Activated CD8-positive, alpha-beta memory T cell treated with anti-CD3 and anti-CD28 coated beads, Interleukin-2, amount 10 ng/mL, durations not matched to agents 7 days and 5 days (primary cell): ENCODE measurements at regions of chr9 and their contacts with region 1.

Region 1: GRCh38 chr9:90102292-90102901 is 497.6 kb downstream of the GADD45G start:
- DNase-seq: peak; percentile 87
- ATAC-seq: peak; percentile 98
- H3K4me3 Mint-ChIP-seq: no peak overlapping the region
- H3K27ac Mint-ChIP-seq: no peak overlapping the region
- H3K4me1 Mint-ChIP-seq: peaks cover 22% of the 10 kb centered on the region
- H3K27me3 Mint-ChIP-seq: peaks cover 16% of the 10 kb centered on the region

Region 2: DNA sequence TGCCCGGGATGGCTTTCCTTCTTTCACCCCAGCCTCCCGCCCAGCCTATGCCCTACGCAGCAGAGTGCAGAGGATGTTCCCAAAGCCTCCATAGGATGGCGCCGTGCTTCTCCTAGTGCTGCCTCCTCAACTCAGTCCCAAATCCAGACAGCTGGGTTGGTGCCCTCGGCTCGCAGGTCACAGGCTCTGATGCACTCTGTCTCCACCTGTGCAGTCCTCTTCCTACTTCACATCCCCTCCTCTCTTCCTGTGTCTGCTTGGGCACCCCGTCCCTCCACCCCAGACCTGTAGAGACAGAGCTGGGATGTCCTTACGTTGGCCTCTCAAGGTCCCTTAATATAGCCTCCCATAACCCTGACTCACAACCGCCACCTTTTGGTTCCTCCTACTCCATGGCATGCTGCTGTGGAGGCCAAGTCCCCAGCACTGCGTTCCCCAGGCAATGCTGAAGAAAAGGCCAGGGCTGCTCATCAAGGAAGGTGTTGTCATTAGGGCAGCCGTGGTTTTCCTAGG is 183.2 kb before region 1 on chr9:
- CTCF ChIA-PET with region 1: interaction called, 17 read pairs
- DNase-seq: peak; percentile 68
- ATAC-seq: peak; percentile 92
- H3K4me3 Mint-ChIP-seq: no peak overlapping the region
- H3K27ac Mint-ChIP-seq: no peak overlapping the region
- H3K4me1 Mint-ChIP-seq: peaks cover 9% of the 10 kb centered on the region
- H3K27me3 Mint-ChIP-seq: peaks cover 36% of the 10 kb centered on the region